Activated CD4-positive, alpha-beta memory T cell treated with anti-CD3 and anti-CD28 coated beads for 36 hours (primary cell): ENCODE measurements at regions of chr1 and their contacts with region 1.

Region 1: DNA sequence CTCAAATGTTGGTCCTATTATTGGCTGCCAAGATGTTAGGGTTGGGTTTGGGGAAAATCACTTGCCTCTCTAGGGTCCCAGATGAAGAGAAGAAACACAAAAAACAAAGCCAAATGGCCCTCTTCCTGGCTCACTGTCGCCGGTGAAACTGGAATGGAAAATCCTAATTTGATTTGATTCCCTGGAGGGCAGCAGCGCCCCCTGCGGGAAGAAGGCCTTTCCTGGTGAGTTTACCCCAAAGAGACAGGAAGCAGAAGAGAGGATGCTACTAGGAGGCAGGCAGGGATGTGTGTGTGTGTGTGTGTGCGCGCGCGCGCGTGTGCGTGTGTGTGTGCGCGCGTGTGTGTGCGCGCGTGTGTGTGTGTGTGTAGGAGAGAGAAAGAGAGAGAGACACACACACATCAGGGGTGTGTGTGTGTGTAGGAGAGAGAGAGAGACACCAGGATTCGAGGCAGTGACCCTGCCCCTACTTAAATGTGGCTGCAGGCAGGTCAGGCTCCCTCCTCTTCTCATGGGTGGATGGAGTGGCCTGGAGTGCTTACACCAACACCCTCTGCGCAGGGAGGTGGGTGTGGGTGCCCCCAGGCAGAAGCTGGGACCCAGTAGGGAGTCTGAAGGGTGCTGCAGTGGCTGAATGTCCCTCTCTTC is 3.1 kb upstream of the SELENON start:
- DNase-seq: peak; percentile 91
- H3K4me3 Mint-ChIP-seq: peak overlapping the region; percentile 42
- H3K27ac Mint-ChIP-seq: peak overlapping the region; percentile 72
- H3K4me1 Mint-ChIP-seq: peaks cover 40% of the 10 kb centered on the region
- H3K27me3 Mint-ChIP-seq: no peaks in the 10 kb centered on the region

Region 2: DNA sequence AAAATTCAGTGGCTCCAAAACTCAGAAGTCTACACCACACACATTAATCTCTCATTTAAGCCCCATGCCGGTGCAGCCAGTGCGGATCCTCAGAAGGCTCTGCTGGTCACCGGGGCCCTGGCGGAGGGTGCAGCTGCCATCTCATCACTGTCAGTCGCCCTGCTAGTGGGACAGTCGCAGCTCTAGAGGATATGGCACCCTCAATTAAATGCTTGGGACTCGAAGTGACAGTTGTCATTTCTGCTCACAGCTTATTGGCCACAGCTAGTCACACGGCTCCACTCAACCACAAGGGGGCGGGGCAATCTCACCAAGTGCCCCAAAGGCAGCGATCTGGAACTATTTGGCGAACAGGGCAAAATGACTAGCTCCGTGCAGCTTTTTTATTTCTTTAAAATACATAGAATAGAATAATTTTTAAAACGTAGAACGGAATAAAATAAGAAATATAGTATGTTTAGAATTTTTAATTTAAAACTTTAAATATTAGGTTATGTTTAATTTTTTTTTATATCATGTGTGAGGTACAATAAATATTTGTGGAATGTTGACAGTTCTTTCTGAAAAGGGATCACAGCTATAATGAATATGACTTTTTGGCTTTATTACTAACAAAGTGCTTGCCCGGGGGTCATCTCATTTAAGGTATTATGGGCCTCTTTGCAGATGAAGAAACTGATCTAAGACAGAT is 188.3 kb before region 1 on chr1:
- CTCF ChIA-PET with region 1: interaction called, 33 read pairs
- POLR2A ChIA-PET with region 1: no interaction called
- intact Hi-C with region 1: loop called (anchors 1 kb)
- DNase-seq: peak; percentile 93
- H3K4me3 Mint-ChIP-seq: no peak overlapping the region
- H3K27ac Mint-ChIP-seq: no peak overlapping the region
- H3K4me1 Mint-ChIP-seq: peaks cover 6% of the 10 kb centered on the region
- H3K27me3 Mint-ChIP-seq: peaks cover 1% of the 10 kb centered on the region

Region 3: DNA sequence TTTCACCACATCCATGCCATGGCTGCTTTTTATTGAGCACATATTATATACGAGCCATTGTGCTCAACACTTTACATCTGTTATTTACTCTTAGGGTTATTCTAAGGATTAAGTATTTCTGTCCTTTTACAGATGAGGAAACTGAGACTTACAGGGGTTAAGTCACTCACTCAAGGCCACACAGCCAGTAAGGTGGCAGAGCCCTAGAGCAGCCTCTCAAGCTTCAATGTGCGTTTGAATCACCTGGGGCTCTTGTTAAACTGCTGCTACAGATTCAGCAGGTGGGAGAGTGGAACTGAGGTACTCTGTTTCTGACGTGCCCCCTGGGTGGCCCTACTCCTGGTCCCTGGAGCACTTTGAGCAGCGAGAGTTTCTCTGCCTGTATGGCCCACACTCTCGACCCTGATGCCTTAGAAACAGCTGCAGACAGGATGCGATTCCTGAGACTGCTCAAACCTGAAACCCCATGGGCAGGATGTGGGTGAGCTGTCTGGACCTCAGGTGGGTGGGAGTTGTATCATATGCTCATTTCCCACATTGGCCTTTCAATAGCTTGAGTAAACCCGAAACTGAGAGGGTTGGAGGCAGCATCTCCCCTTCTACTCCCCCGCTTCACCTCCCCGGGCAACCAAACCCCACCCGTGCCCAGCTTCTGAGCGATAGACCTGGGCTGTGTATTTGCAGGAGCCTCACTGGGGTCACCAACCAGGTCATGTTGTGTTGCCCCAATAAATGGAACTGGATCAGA is 121.0 kb before region 1 on chr1:
- CTCF ChIA-PET with region 1: interaction called, 6 read pairs
- POLR2A ChIA-PET with region 1: interaction called, 8 read pairs
- intact Hi-C with region 1: loop called (anchors 2 kb)
- DNase-seq: peak; percentile 96
- H3K4me3 Mint-ChIP-seq: peak overlapping the region; percentile 59
- H3K27ac Mint-ChIP-seq: peak overlapping the region; percentile 69
- H3K4me1 Mint-ChIP-seq: peaks cover 71% of the 10 kb centered on the region
- H3K27me3 Mint-ChIP-seq: peaks cover 15% of the 10 kb centered on the region

Region 4: GRCh38 chr1:25711555-25712298 is 85.2 kb before region 1 on chr1:
- CTCF ChIA-PET with region 1: no interaction called
- POLR2A ChIA-PET with region 1: no interaction called
- intact Hi-C with region 1: loop called (anchors 5 kb)
- DNase-seq: peak; percentile 75
- H3K4me3 Mint-ChIP-seq: peak overlapping the region; percentile 17
- H3K27ac Mint-ChIP-seq: peak overlapping the region; percentile 57
- H3K4me1 Mint-ChIP-seq: peaks cover 54% of the 10 kb centered on the region
- H3K27me3 Mint-ChIP-seq: no peaks in the 10 kb centered on the region

Region 5: GRCh38 chr1:25810341-25811299 is 13.7 kb after region 1 on chr1:
- CTCF ChIA-PET with region 1: interaction called, 18 read pairs
- POLR2A ChIA-PET with region 1: no interaction called
- intact Hi-C with region 1: no loop called
- DNase-seq: peak; percentile 85
- H3K4me3 Mint-ChIP-seq: no peak overlapping the region
- H3K27ac Mint-ChIP-seq: no peak overlapping the region
- H3K4me1 Mint-ChIP-seq: peaks cover 2% of the 10 kb centered on the region
- H3K27me3 Mint-ChIP-seq: no peaks in the 10 kb centered on the region

Region 6: GRCh38 chr1:25858906-25859789 is 62.2 kb after region 1 on chr1 and contains the start of gene AUNIP:
- CTCF ChIA-PET with region 1: no interaction called
- POLR2A ChIA-PET with region 1: no interaction called
- intact Hi-C with region 1: no loop called
- DNase-seq: peak; percentile 93
- H3K4me3 Mint-ChIP-seq: peak within 1 kb of the TSS; percentile 86
- H3K27ac Mint-ChIP-seq: peak within 1 kb of the TSS; percentile 86
- H3K4me1 Mint-ChIP-seq: peaks cover 15% of the 10 kb centered on the region
- H3K27me3 Mint-ChIP-seq: no peaks in the 10 kb centered on the region
- total RNA-seq, gene AUNIP: 7.8 to 10.1 TPM